ENCODE measurements at regions of chr7 and their contacts with region 1.

Region 1: GRCh38 chr7:151368136-151368571 is 26.5 kb downstream of the NUB1 start:
- DNase-seq: peak; percentile 85
- H3K4me3 ChIP-seq: no peak overlapping the region
- H3K27ac ChIP-seq: no peak overlapping the region
- H3K4me1 ChIP-seq: peaks cover 5% of the 10 kb centered on the region
- H3K27me3 ChIP-seq: no peaks in the 10 kb centered on the region
- CTCF ChIP-seq: peak; percentile 95

Region 2: DNA sequence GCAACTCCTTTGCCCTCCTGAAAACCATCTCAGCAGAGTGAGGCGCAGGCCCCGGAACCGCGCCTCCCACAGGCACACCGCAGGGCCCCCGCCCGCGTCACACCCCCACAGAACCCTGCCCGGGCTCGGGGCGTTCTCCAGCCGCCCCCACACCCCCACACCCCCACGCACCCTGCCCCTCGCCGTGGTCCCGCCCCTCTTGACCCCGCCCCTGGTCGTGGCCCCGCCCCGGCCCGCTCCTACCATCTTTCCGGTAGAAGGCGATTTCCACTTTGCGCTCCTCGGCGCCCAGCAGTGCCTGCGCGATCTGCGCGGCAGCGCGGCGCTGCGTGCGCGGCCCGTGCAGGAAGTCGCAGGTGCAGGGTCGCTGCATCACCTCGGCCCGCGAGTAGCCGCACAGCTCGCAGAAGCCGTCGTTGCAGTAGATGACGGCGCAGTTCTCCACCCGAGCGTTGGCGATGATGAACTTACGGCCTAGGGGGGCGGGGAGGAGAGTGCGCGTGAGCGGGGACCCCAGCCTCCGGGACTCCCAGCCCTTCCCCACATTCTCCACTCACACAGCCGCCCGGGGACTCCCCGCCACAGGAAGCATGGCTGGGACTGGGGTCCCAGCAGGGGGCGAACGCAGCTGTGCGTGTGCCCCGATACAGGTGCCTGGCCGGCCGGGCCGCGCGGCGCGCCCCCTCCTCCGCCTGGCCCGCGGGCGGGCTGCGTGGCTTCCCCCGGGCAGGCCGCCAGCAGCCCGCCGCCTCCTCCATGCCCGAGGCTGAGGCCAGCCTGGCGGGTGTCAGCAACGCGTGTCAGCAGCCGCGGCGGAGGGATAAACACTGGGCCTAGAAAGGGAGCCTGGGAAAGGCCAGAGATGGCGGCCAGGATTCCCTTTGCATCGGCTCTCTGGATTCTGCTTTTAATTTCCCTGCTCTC is 393.4 kb before region 1 on chr7:
- intact Hi-C with region 1: no loop called
- DNase-seq: peak; percentile 87
- H3K4me3 ChIP-seq: peak overlapping the region; percentile 42
- H3K27ac ChIP-seq: peak overlapping the region; percentile 62
- H3K4me1 ChIP-seq: no peaks in the 10 kb centered on the region
- H3K27me3 ChIP-seq: peaks cover 18% of the 10 kb centered on the region
- CTCF ChIP-seq: no peak

Region 3: GRCh38 chr7:151432791-151433521 is 64.8 kb after region 1 on chr7:
- intact Hi-C with region 1: no loop called
- DNase-seq: no peak
- H3K4me3 ChIP-seq: no peak overlapping the region
- H3K27ac ChIP-seq: no peak overlapping the region
- H3K4me1 ChIP-seq: no peaks in the 10 kb centered on the region
- H3K27me3 ChIP-seq: no peaks in the 10 kb centered on the region
- CTCF ChIP-seq: no peak

Region 4: DNA sequence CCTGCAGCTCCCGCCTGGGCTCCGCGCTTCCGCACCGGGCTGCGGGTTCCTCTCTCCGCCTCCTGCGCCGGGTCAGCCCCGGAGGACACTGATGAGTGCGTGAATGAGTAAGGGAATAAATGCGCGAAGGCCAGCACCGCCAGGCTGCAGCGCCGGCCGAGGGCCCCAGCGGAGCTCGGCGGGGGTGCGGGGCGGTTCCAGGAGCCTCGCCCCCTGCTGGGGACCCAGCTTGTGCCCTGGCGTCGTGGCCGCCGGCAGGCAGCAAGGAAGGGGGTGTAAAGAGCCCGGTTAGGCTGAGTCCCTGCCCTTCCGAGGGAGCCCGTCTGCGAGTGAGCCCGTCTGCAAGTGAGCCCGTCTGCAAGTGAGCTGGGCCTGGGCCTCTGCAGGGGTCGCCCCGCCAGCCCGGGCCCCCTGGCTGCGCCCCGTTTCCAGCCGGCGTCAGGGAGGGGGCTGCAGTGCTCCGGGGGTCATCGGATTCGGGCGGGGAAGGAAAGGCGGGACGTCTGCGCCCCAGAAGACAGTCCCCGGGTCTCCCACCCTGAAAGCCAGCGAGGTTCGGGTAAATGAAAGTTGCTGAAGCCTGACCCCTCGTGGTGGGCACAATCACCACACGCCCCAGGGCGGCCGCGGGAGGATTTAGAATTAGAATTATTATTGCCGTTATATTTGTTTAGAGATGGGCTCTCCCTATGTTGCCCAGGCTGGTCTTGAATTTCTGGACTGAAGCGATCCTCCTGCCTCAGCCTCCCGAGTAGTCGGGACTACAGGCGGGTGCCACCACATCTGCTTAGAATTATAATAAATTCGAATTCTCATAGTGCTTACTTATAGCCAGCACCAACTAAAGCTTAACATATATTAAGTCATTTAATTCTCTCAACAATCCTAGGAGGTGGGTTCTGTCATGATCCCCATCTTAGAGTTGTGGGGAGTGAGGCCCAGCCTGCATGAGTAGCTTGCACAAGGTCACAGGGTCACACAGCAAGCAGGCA is 80.4 kb after region 1 on chr7:
- intact Hi-C with region 1: loop called (anchors 2 kb)
- DNase-seq: peak; percentile 72
- H3K4me3 ChIP-seq: peak overlapping the region; percentile 46
- H3K27ac ChIP-seq: no peak overlapping the region
- H3K4me1 ChIP-seq: peaks cover 3% of the 10 kb centered on the region
- H3K27me3 ChIP-seq: no peaks in the 10 kb centered on the region
- CTCF ChIP-seq: peak; percentile 69